Pancreas (tissue), 10 donors: ENCODE measurements at regions of chr10 and their contacts with region 1.

Region 1: GRCh38 chr10:60114765-60115586 is 208.6 kb upstream of the CCDC6 start:
- DNase-seq: peak in 1 of 6 donors; percentile 16
- ATAC-seq: peak; percentile 53 to 76 (median 72)
- H3K4me3 ChIP-seq: no peak overlapping the region
- H3K27ac ChIP-seq: no peak overlapping the region
- H3K4me1 ChIP-seq: no peaks in the 10 kb centered on the region
- H3K27me3 ChIP-seq: no peaks in the 10 kb centered on the region
- CTCF ChIP-seq: peak in 3 of 4 donors; percentile 14 to 49 (median 33)

Region 2: DNA sequence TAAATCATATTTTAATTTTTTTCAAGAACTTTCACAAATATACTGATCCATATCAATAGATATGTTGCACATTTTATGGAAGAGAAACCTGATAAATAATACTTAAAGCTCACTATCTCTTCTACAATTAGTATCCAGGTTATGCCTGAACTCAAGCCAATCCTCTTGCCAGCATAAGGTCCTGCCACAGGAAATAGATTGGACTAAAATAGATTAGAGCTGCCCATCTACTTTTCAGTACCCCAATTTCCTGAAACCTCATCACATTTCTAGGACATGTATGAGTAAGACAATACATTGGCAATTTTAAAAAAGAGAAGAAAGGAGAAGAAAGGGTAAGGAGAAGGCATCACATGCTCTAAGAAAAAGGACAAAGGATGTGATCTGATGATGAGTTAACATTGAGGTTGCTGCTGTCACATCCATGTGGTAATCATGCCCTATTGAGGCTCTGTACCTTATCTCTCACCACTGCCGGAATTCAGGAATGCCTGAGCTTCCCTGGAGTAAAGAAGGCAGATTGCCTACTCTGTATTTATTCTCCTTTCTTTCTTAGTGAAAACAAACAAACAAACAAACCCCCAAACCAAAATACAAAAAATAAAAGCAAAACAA is 75.0 kb after region 1 on chr10:
- intact Hi-C with region 1: loop called in 1 of 3 experiments (anchors 10 kb)
- DNase-seq: no peak
- ATAC-seq: no peak
- H3K4me3 ChIP-seq: no peak overlapping the region
- H3K27ac ChIP-seq: no peak overlapping the region
- H3K4me1 ChIP-seq: no peaks in the 10 kb centered on the region
- H3K27me3 ChIP-seq: no peaks in the 10 kb centered on the region
- CTCF ChIP-seq: no peak

Region 3: DNA sequence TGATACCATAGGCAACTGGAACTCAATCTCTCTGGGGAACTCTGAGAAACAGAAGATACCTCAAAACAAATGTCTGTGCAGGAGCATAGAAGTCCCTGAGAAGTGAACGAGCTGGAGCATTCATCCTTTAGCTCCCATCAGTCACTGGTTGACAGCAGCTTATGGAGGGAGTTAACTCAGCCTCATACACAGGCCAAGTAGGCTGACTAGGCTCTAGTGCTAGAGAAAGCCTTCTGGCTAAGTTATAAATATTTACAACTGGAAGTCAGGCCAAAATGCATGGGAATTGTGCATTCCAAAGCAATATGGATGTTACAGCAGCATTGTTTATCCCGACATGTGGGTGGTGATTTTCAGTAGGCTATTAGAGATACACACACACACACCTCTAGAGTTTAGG is 208.2 kb after region 1 on chr10:
- intact Hi-C with region 1: no loop called
- DNase-seq: no peak
- ATAC-seq: no peak
- H3K4me3 ChIP-seq: no peak overlapping the region
- H3K27ac ChIP-seq: no peak overlapping the region
- H3K4me1 ChIP-seq: no peaks in the 10 kb centered on the region
- H3K27me3 ChIP-seq: no peaks in the 10 kb centered on the region
- CTCF ChIP-seq: no peak

Region 4: GRCh38 chr10:60434418-60435046 is 319.6 kb after region 1 on chr10:
- intact Hi-C with region 1: loop called in 2 of 3 experiments (anchors 10 kb)
- DNase-seq: peak in 2 of 6 donors; percentile 9 to 38
- ATAC-seq: peak; percentile 60 to 88 (median 85)
- H3K4me3 ChIP-seq: no peak overlapping the region
- H3K27ac ChIP-seq: no peak overlapping the region
- H3K4me1 ChIP-seq: no peaks in the 10 kb centered on the region
- H3K27me3 ChIP-seq: no peaks in the 10 kb centered on the region
- CTCF ChIP-seq: peak; percentile 18 to 63 (median 54)

Region 5: DNA sequence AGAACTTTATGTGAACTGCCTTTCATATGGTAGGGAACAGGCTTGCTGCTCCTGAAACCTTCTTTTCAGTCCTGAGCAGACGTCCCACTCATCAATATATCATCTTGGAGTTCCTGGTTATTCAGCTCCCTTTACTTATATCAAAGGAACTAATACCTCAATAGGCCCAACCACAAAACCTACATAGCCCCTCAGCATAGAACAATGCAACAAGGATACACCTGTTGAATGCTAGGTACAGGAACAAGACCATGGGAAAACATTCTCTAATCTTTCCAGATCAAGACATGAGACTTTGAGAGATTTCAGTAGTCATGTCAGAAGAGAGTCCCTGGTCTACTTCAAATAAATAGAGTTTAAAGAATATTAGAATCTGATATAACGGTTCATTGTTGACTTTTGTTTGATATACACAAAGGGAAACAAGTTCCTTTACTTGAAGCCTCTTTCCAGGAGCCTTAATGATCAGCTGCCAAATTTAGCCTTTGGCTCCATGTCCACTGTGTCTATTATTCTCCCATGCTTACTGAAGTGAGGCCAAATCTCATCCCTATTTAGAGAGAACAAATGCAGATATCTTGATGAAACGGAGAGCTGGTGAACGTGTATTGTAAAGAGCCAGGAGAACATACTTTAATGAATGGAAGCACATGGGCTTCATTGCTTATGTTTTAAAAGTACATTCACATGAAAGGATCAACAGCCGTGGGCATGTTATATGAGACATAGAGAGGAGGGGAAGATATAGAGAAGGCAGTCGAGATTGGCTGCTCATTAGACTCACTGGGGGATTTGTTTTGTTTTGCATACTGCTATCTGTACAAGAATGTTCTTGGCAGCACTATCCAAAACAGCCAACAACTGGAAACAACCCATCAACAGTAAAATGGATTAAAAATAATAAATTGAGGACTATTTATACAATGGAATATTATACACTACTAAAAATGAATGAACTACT is 819.5 kb after region 1 on chr10:
- intact Hi-C with region 1: no loop called
- DNase-seq: no peak
- ATAC-seq: no peak
- H3K4me3 ChIP-seq: no peak overlapping the region
- H3K27ac ChIP-seq: no peak overlapping the region
- H3K4me1 ChIP-seq: peaks cover 11 to 29% (median 14%) of the 10 kb centered on the region in 3 donors
- H3K27me3 ChIP-seq: no peaks in the 10 kb centered on the region
- CTCF ChIP-seq: no peak